Common myeloid progenitor, CD34-positive (primary cell): ENCODE measurements at regions of chr9 and their contacts with region 1.

Region 1: GRCh38 chr9:4339357-4339756 is 39.5 kb upstream of the GLIS3 start:
- DNase-seq: peak; percentile 86 to 95 (median 95)
- H3K4me3 ChIP-seq: peak overlapping the region in 1 of 7 experiments; percentile 20
- H3K27ac ChIP-seq: no peak overlapping the region
- H3K4me1 ChIP-seq: peaks cover 0 to 4% (median 0%) of the 10 kb centered on the region in 4 experiments
- H3K27me3 ChIP-seq: peaks cover 0 to 3% (median 0%) of the 10 kb centered on the region in 5 experiments

Region 2: GRCh38 chr9:3732077-3733038 is 607.0 kb before region 1 on chr9:
- CTCF ChIA-PET with region 1: interaction called, 26 read pairs
- POLR2A ChIA-PET with region 1: no interaction called
- DNase-seq: peak; percentile 72 to 85 (median 79)
- H3K4me3 ChIP-seq: peak overlapping the region in 3 of 7 experiments; percentile 22 to 61 (median 29)
- H3K27ac ChIP-seq: no peak overlapping the region
- H3K4me1 ChIP-seq: no peaks in the 10 kb centered on the region
- H3K27me3 ChIP-seq: no peaks in the 10 kb centered on the region

Region 3: GRCh38 chr9:4327504-4328191 is 11.7 kb before region 1 on chr9:
- CTCF ChIA-PET with region 1: interaction called, 29 read pairs
- POLR2A ChIA-PET with region 1: no interaction called
- DNase-seq: no peak
- H3K4me3 ChIP-seq: no peak overlapping the region
- H3K27ac ChIP-seq: no peak overlapping the region
- H3K4me1 ChIP-seq: no peaks in the 10 kb centered on the region
- H3K27me3 ChIP-seq: no peaks in the 10 kb centered on the region

Region 4: DNA sequence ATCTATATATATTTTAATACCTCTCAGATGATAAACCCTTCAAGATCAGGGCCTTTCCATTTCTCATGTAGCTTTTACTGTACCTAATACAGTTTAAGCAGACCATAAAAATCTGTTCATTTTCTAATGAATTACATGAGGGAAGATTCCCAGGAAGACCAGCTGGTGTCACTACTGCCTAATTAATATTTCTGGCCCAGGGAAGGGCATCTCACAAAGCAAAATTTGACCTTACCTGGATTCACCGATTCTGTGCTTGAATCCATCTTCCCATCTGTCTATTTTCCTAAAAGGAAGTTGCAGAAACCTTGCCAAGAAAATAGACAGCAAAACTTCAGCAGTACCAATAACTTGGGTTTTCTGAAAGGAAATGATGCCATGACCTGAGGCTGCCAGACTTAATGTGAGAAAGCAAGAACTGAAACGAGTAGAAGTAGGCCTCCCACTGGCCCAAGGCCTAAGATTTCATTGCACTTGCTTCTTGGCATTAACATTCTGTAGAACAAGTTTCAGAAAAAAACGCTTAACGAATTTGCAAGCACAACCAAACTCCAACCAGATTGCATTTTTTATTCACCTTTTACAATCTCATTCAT is 43.5 kb after region 1 on chr9:
- CTCF ChIA-PET with region 1: no interaction called
- POLR2A ChIA-PET with region 1: no interaction called
- DNase-seq: peak; percentile 26 to 42 (median 29)
- H3K4me3 ChIP-seq: no peak overlapping the region
- H3K27ac ChIP-seq: no peak overlapping the region
- H3K4me1 ChIP-seq: no peaks in the 10 kb centered on the region
- H3K27me3 ChIP-seq: peaks cover 0 to 9% (median 2%) of the 10 kb centered on the region in 5 experiments

Region 5: GRCh38 chr9:4464911-4465513 is 125.7 kb after region 1 on chr9:
- CTCF ChIA-PET with region 1: no interaction called
- POLR2A ChIA-PET with region 1: no interaction called
- DNase-seq: no peak
- H3K4me3 ChIP-seq: no peak overlapping the region
- H3K27ac ChIP-seq: no peak overlapping the region
- H3K4me1 ChIP-seq: no peaks in the 10 kb centered on the region
- H3K27me3 ChIP-seq: peaks cover 0 to 3% (median 0%) of the 10 kb centered on the region in 5 experiments